Naive thymus-derived CD4-positive, alpha-beta T cell (primary cell): ENCODE measurements at regions of chr18 and their contacts with region 1.

Region 1: DNA sequence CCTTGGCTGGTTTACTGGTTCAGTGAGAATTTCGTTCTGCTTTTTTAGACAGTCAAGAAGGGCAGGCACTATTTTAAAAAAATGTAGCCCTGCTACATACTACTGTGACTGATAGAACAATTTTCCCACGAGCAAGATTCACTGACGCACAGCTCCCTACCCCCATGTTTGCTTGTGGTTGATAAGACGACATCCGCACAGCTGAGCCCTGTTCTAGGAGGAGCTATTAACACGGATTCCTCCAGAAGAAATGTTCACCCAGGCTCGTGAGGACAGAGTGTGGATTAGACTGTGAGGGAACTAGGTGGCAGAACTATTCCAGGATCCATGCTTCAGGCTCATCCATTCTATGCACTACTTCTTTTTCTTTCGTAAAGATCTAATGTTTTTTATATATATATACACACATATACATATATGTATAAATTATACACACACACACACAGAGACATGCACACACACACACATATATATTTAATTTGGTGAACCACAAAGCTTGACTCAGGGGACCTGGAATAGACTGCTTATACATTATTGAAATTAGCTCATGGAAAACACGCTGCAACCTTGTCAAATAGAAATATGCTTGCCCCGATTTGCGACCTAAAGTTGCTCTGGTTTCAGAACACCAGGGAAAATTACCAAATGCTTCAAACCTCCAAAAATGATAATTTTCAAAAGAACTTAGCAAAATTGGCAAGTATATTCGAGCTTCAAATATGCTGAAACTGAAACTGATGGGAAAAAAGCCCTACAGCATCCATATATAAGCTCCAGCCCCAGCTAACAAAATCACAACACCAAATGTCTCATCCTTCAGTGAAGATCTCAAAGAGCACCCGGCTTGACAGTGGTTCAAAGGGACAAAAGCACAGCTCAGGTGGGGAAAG is 370.4 kb downstream of the SOCS6 start:
- DNase-seq: peak in 8 of 9 donors; percentile 13 to 88 (median 86)
- ATAC-seq: peak; percentile 97
- H3K4me3 ChIP-seq: no peak overlapping the region
- H3K4me3 Mint-ChIP-seq: peak overlapping the region in 9 of 10 donors; percentile 43 to 80 (median 71)
- H3K27ac ChIP-seq: peak overlapping the region; percentile 77
- H3K27ac Mint-ChIP-seq: peak overlapping the region in 8 of 9 donors; percentile 93 to 99 (median 97)
- H3K4me1 ChIP-seq: peaks cover 0 to 62% of the 10 kb centered on the region in 2 donors
- H3K4me1 Mint-ChIP-seq: peaks cover 17 to 82% (median 66%) of the 10 kb centered on the region in 7 donors
- H3K27me3 ChIP-seq: no peaks in the 10 kb centered on the region
- H3K27me3 Mint-ChIP-seq: no peaks in the 10 kb centered on the region

Region 2: GRCh38 chr18:69580107-69580506 is 1079.2 kb before region 1 on chr18:
- CTCF ChIA-PET with region 1: no interaction called
- POLR2A ChIA-PET with region 1: no interaction called
- intact Hi-C with region 1: no loop called
- DNase-seq: peak in 6 of 9 donors; percentile 3 to 26 (median 14)
- ATAC-seq: no peak
- H3K4me3 ChIP-seq: peak overlapping the region; percentile 21
- H3K4me3 Mint-ChIP-seq: peak overlapping the region in 8 of 10 donors; percentile 21 to 75 (median 64)
- H3K27ac ChIP-seq: no peak overlapping the region
- H3K27ac Mint-ChIP-seq: peak overlapping the region in 8 of 9 donors; percentile 29 to 92 (median 74)
- H3K4me1 ChIP-seq: peaks cover 0 to 3% of the 10 kb centered on the region in 2 donors
- H3K4me1 Mint-ChIP-seq: peaks cover 8 to 25% (median 21%) of the 10 kb centered on the region in 7 donors
- H3K27me3 ChIP-seq: no peaks in the 10 kb centered on the region
- H3K27me3 Mint-ChIP-seq: no peaks in the 10 kb centered on the region

Region 3: GRCh38 chr18:70645971-70646370 is 13.3 kb before region 1 on chr18:
- CTCF ChIA-PET with region 1: interaction called, 7 read pairs
- POLR2A ChIA-PET with region 1: interaction called, 5 read pairs
- intact Hi-C with region 1: loop called in 1 of 2 experiments (anchors 2 kb)
- DNase-seq: no peak
- ATAC-seq: no peak
- H3K4me3 ChIP-seq: no peak overlapping the region
- H3K4me3 Mint-ChIP-seq: no peak overlapping the region
- H3K27ac ChIP-seq: no peak overlapping the region
- H3K27ac Mint-ChIP-seq: peak overlapping the region in 1 of 9 donors; percentile 23
- H3K4me1 ChIP-seq: peaks cover 0 to 8% of the 10 kb centered on the region in 2 donors
- H3K4me1 Mint-ChIP-seq: peaks cover 5 to 53% (median 24%) of the 10 kb centered on the region in 7 donors
- H3K27me3 ChIP-seq: no peaks in the 10 kb centered on the region
- H3K27me3 Mint-ChIP-seq: no peaks in the 10 kb centered on the region

Region 4: DNA sequence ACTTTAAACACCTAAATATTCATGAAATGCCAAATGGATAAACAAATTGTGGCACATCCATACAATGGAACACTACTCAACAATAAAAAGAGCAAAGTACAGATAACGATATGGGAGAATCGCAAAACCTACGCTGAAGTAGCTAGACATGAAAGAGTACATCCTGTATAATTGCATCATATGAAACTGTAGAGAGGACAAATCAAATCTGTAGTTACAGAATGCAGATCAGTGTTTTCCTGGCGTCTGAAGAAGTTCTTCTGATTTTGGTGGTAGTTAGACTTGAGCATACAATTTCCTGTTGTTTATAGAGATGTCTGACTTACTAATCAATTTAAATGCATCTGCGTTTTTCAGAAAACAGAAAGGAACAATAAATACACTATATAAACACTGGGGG is 24.0 kb after region 1 on chr18:
- CTCF ChIA-PET with region 1: interaction called, 3 read pairs
- POLR2A ChIA-PET with region 1: interaction called, 11 read pairs
- intact Hi-C with region 1: loop called in 1 of 2 experiments (anchors 1 kb)
- DNase-seq: peak in 7 of 9 donors; percentile 39 to 78 (median 70)
- ATAC-seq: peak; percentile 94
- H3K4me3 ChIP-seq: no peak overlapping the region
- H3K4me3 Mint-ChIP-seq: peak overlapping the region in 9 of 10 donors; percentile 6 to 65 (median 30)
- H3K27ac ChIP-seq: peak overlapping the region; percentile 65
- H3K27ac Mint-ChIP-seq: peak overlapping the region in 8 of 9 donors; percentile 80 to 97 (median 89)
- H3K4me1 ChIP-seq: peaks cover 0 to 15% of the 10 kb centered on the region in 2 donors
- H3K4me1 Mint-ChIP-seq: peaks cover 4 to 37% (median 30%) of the 10 kb centered on the region in 7 donors
- H3K27me3 ChIP-seq: no peaks in the 10 kb centered on the region
- H3K27me3 Mint-ChIP-seq: no peaks in the 10 kb centered on the region